ENCODE measurements at regions of chr15 and their contacts with region 1.

Region 1: GRCh38 chr15:96356494-96357455 is 26.3 kb downstream of the NR2F2 start:
- DNase-seq: peak; percentile 76 to 88 (median 80)
- ATAC-seq: peak; percentile 49 to 72 (median 63)
- H3K4me3 ChIP-seq: peak overlapping the region; percentile 35 to 77 (median 65)
- H3K27ac ChIP-seq: peak overlapping the region in 11 of 12 donors; percentile 44 to 77 (median 59)
- H3K4me1 ChIP-seq: peaks cover 0 to 66% (median 30%) of the 10 kb centered on the region in 12 donors
- H3K27me3 ChIP-seq: peaks cover 6 to 98% (median 61%) of the 10 kb centered on the region in 9 donors
- CTCF ChIP-seq: peak; percentile 93 to 99 (median 97)
- POLR2A ChIP-seq: peak in 1 of 2 donors; percentile 18

Region 2: DNA sequence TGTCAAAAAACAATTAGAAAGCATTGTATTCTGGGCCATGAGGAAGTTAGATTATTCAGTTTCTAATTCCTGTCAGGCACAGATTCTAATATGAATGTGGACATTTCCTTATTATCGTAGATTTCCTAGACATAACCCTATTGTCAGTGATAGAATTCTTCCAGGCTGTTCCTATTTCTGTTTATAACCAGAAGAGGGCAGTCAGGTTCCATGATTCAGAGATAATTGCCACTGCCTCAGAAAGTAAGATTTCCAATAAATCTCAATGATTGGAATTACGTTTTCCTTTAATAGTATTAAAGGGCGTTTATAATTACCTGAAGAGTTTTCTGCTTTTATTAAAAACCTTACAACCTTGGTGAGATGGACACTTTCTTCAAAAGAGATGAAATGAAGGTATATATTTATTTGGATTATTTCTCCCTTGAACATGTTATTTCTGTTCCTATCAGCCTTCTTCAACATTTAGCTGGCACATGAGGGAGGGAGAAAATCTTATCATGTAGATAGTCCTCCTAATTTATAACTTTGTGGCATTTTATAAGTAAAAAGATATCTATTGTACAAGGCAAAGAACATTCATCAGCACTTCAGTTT is 1686.2 kb before region 1 on chr15:
- intact Hi-C with region 1: loop called in 1 of 10 experiments (anchors 5 kb)
- DNase-seq: no peak
- ATAC-seq: peak in 2 of 4 donors; percentile 52 to 54
- H3K4me3 ChIP-seq: no peak overlapping the region
- H3K27ac ChIP-seq: peak overlapping the region in 2 of 12 donors; percentile 6 to 21
- H3K4me1 ChIP-seq: peaks cover 0 to 15% (median 5%) of the 10 kb centered on the region in 12 donors
- H3K27me3 ChIP-seq: peaks cover 0 to 7% (median 0%) of the 10 kb centered on the region in 9 donors
- CTCF ChIP-seq: peak; percentile 63 to 86 (median 72)
- POLR2A ChIP-seq: no peak

Region 3: GRCh38 chr15:95025924-95026728 is 1330.6 kb before region 1 on chr15:
- intact Hi-C with region 1: loop called in 1 of 10 experiments (anchors 10 kb)
- DNase-seq: peak in 3 of 5 donors; percentile 16 to 27 (median 26)
- ATAC-seq: peak in 2 of 4 donors; percentile 33 to 47
- H3K4me3 ChIP-seq: no peak overlapping the region
- H3K27ac ChIP-seq: no peak overlapping the region
- H3K4me1 ChIP-seq: no peaks in the 10 kb centered on the region
- H3K27me3 ChIP-seq: no peaks in the 10 kb centered on the region
- CTCF ChIP-seq: peak; percentile 36 to 66 (median 47)
- POLR2A ChIP-seq: no peak

Region 4: GRCh38 chr15:96585484-96586386 is 229.0 kb after region 1 on chr15:
- intact Hi-C with region 1: loop called in 9 of 10 experiments (anchors 2 to 10 kb)
- DNase-seq: no peak
- ATAC-seq: no peak
- H3K4me3 ChIP-seq: no peak overlapping the region
- H3K27ac ChIP-seq: no peak overlapping the region
- H3K4me1 ChIP-seq: no peaks in the 10 kb centered on the region
- H3K27me3 ChIP-seq: peaks cover 0 to 18% (median 4%) of the 10 kb centered on the region in 9 donors
- CTCF ChIP-seq: peak in 6 of 12 donors; percentile 23 to 42 (median 35)
- POLR2A ChIP-seq: no peak

Region 5: DNA sequence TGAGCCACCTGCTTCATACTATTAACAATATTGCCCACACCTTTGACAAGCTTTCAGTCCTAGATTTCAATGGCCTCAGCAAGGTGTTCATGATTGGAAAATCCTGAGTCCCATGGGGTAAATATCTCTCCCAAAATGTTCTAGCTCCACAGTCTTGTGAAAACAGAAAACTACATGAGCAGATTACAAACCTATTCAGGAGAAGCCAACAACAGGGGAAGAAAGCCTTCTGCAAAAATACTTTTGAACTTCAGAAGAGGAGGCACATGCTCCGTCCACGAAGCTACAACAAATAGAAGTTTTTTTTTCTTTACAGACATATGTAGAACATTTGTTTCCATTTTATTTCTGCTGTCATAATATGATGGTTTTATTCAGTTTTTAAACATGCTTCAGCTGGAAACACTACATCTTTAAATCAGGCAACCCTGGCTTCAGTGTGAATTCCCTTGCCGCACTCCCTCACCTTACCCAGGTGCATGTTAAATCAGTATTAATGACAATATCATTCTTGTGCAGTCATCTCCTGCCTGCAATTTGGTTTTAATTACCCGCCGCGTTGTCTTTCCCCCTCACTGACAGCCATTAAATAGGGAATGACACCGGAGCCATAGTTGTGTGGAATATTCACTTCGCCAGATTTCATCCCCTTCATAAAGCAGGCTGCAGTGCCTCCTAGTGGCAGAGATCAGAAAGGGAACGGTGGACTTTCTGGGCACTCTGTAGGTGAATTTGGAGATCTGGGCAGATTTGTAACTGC is 878.3 kb after region 1 on chr15:
- intact Hi-C with region 1: loop called in 9 of 10 experiments (anchors 2 to 10 kb)
- DNase-seq: peak in 3 of 5 donors; percentile 19 to 24 (median 24)
- ATAC-seq: peak in 3 of 4 donors; percentile 49 to 62 (median 60)
- H3K4me3 ChIP-seq: peak overlapping the region in 2 of 12 donors; percentile 17
- H3K27ac ChIP-seq: no peak overlapping the region
- H3K4me1 ChIP-seq: peaks cover 0 to 4% (median 0%) of the 10 kb centered on the region in 12 donors
- H3K27me3 ChIP-seq: peaks cover 0 to 3% (median 0%) of the 10 kb centered on the region in 9 donors
- CTCF ChIP-seq: peak; percentile 68 to 91 (median 82)
- POLR2A ChIP-seq: no peak

Measured in heart left ventricle (tissue), 16 donors.